ENCODE measurements at regions of chr10 and their contacts with region 1.

Region 1: DNA sequence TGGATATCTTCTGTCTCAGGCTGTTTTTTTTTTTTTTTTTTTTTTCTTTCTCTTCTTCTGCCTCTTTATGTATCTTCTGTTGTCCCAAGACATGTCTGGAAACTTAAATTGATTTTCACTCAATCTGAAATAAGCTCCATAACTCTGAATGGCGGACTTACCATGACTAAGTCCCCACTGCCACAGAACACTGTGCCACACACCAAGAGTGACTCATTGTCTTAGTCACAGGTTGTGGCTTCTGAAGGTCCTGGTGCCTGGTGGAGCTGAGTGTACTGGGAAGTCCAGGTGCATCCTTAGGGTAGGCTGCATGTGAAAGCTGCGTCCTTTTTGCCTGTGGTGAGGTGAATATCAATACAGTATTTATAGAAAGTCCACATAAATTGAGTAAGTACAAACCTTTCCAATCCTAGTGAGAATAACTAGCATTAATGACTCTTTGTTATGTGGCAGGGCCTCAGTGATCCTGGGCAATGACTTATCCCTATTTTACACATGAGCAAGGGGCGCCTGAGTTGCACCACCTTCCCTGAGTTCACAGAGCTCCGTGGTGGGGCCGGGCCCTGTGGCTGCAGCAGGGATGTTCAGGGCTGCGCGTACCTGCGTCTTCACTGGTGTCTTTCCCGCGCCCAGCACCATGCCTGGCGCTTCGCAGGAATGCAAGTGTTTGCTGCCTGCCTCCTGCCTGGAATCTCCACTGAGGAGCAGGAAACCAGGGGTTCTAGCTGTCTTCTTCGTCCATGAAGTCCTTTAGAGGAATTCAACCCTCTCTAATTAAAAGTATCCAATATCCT is 4.3 kb downstream of the PFKP start:
- DNase-seq: no peak
- H3K4me3 ChIP-seq: no peak overlapping the region
- H3K27ac ChIP-seq: no peak overlapping the region
- H3K4me1 ChIP-seq: peaks cover 0 to 6% of the 10 kb centered on the region in 2 donors
- H3K27me3 ChIP-seq: no peaks in the 10 kb centered on the region
- CTCF ChIP-seq: no peak
- POLR2A ChIP-seq: no peak

Region 2: GRCh38 chr10:3151889-3152565 is 80.4 kb after region 1 on chr10:
- intact Hi-C with region 1: no loop called
- DNase-seq: no peak
- H3K4me3 ChIP-seq: no peak overlapping the region
- H3K27ac ChIP-seq: no peak overlapping the region
- H3K4me1 ChIP-seq: no peaks in the 10 kb centered on the region
- H3K27me3 ChIP-seq: no peaks in the 10 kb centered on the region
- CTCF ChIP-seq: no peak
- POLR2A ChIP-seq: no peak

Region 3: DNA sequence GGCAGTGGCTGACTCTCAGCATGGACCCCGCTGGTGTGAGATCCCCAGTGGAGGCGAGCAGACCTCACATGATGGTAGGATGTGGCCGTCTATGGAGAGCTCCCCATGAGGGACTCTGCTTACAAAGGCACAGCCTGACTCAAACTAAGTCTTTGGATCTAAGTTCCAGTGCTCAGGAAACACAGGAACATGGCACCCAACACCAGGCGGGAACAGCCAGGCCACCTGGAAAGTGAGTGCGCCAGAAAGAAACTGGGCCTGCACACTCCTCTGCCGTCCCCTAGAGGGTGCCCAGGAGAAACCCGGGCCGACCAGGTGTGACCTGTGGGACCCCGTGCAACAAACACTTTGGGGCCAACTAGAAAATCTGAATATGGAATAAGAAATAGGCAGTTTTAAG is 90.9 kb after region 1 on chr10:
- intact Hi-C with region 1: loop called (anchors 10 kb)
- DNase-seq: no peak
- H3K4me3 ChIP-seq: no peak overlapping the region
- H3K27ac ChIP-seq: no peak overlapping the region
- H3K4me1 ChIP-seq: no peaks in the 10 kb centered on the region
- H3K27me3 ChIP-seq: no peaks in the 10 kb centered on the region
- CTCF ChIP-seq: no peak
- POLR2A ChIP-seq: no peak